ENCODE measurements at regions of chr5 and their contacts with region 1.

Region 1: GRCh38 chr5:59810041-59810440 is 83.5 kb downstream of the PDE4D start:
- DNase-seq: peak; percentile 66
- H3K4me3 Mint-ChIP-seq: peak overlapping the region; percentile 62
- H3K27ac Mint-ChIP-seq: no peak overlapping the region
- H3K4me1 Mint-ChIP-seq: peaks cover 11% of the 10 kb centered on the region
- H3K27me3 Mint-ChIP-seq: peaks cover 16% of the 10 kb centered on the region
- CTCF ChIP-seq: peak; percentile 83

Region 2: GRCh38 chr5:58983526-58984452 is 826.3 kb before region 1 on chr5:
- CTCF ChIA-PET with region 1: no interaction called
- POLR2A ChIA-PET with region 1: no interaction called
- intact Hi-C with region 1: no loop called
- DNase-seq: no peak
- H3K4me3 Mint-ChIP-seq: no peak overlapping the region
- H3K27ac Mint-ChIP-seq: no peak overlapping the region
- H3K4me1 Mint-ChIP-seq: peaks cover 15% of the 10 kb centered on the region
- H3K27me3 Mint-ChIP-seq: no peaks in the 10 kb centered on the region
- CTCF ChIP-seq: no peak

Region 3: DNA sequence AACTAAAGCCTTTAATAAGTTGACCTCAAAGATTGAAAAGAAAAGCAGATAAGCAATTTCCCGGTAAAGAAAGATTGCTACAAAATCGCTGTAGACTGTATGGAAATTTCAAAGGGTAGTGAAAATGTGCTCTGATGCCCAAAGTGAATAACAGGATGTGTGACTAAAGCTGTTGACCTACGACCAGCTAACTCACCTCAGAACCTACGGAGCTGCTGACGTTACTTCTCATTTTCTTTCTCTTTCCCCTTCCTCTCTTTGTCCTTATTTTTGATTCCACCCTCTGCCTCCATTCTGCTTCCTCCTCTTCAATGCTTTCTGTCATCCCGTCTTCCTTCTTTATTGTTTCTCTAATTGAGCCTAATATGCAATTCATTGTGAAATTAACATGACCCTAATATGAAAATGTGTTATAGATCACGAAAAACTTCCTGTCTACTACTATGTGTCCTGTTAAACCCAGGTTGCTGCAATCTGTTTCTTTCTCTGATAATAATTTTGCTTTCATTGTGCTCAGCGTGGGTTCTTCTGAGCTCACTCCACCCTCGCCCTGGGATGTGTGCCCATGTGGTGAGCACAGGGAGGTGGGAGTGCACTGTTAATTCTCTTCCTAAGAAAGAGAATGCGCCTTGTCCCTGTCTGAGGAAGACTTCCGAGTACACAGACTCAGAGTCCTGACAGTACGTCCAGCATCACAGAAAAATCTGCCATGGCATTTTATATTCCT is 19.5 kb before region 1 on chr5:
- CTCF ChIA-PET with region 1: no interaction called
- POLR2A ChIA-PET with region 1: no interaction called
- intact Hi-C with region 1: no loop called
- DNase-seq: peak; percentile 79
- H3K4me3 Mint-ChIP-seq: peak overlapping the region; percentile 52
- H3K27ac Mint-ChIP-seq: peak overlapping the region; percentile 89
- H3K4me1 Mint-ChIP-seq: peaks cover 67% of the 10 kb centered on the region
- H3K27me3 Mint-ChIP-seq: no peaks in the 10 kb centered on the region
- CTCF ChIP-seq: no peak

Region 4: DNA sequence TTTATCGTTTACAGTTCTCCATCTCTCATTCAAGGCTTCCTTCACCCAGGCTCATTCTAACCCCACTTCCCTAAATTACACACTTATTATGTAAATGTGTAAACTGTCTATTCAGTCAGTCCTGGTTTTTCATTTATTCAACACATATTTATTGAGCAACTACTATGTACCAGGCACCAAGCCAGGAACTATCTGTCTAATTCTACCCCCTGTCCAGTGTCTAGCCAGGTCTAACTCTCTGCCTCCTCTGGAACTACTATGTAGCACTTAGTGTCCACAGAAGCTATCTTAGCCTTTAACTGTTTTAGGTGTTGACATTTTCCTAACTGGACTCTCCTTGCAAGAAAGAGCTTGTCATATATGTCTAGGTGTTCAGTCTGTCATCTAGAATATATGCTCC is 27.0 kb after region 1 on chr5:
- CTCF ChIA-PET with region 1: interaction called, 10 read pairs
- POLR2A ChIA-PET with region 1: no interaction called
- intact Hi-C with region 1: no loop called
- DNase-seq: no peak
- H3K4me3 Mint-ChIP-seq: no peak overlapping the region
- H3K27ac Mint-ChIP-seq: no peak overlapping the region
- H3K4me1 Mint-ChIP-seq: peaks cover 4% of the 10 kb centered on the region
- H3K27me3 Mint-ChIP-seq: peaks cover 68% of the 10 kb centered on the region
- CTCF ChIP-seq: no peak

Region 5: GRCh38 chr5:60007701-60008100 is 197.7 kb after region 1 on chr5:
- CTCF ChIA-PET with region 1: no interaction called
- POLR2A ChIA-PET with region 1: no interaction called
- intact Hi-C with region 1: no loop called
- DNase-seq: no peak
- H3K4me3 Mint-ChIP-seq: no peak overlapping the region
- H3K27ac Mint-ChIP-seq: no peak overlapping the region
- H3K4me1 Mint-ChIP-seq: no peaks in the 10 kb centered on the region
- H3K27me3 Mint-ChIP-seq: peaks cover 21% of the 10 kb centered on the region
- CTCF ChIP-seq: no peak

Region 6: GRCh38 chr5:60161340-60161934 is 351.4 kb after region 1 on chr5:
- CTCF ChIA-PET with region 1: interaction called, 11 read pairs
- POLR2A ChIA-PET with region 1: no interaction called
- intact Hi-C with region 1: loop called (anchors 1 kb)
- DNase-seq: peak; percentile 40
- H3K4me3 Mint-ChIP-seq: no peak overlapping the region
- H3K27ac Mint-ChIP-seq: no peak overlapping the region
- H3K4me1 Mint-ChIP-seq: no peaks in the 10 kb centered on the region
- H3K27me3 Mint-ChIP-seq: peaks cover 50% of the 10 kb centered on the region
- CTCF ChIP-seq: peak; percentile 35

Region 7: DNA sequence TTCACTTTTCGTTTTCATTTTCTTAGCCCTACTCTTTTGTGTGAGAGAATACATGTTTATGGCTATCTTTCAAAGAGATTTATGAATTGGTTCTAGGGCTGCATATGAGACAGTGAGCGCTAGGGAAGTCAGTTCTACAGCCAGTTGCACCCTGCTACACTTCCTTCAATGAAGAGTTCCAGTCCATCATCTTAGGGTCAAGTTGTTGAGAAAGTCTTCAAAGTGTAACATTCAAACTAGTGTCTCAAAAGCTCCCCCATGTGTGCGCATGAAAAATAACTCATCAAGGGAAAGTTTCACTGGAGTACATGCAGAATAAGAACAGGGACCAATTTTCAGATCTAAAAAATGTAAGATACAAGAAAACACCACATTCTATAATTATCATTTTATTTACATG is 572.7 kb after region 1 on chr5:
- CTCF ChIA-PET with region 1: interaction called, 21 read pairs
- POLR2A ChIA-PET with region 1: interaction called, 3 read pairs
- intact Hi-C with region 1: loop called (anchors 1 kb)
- DNase-seq: peak; percentile 35
- H3K4me3 Mint-ChIP-seq: no peak overlapping the region
- H3K27ac Mint-ChIP-seq: no peak overlapping the region
- H3K4me1 Mint-ChIP-seq: no peaks in the 10 kb centered on the region
- H3K27me3 Mint-ChIP-seq: peaks cover 85% of the 10 kb centered on the region
- CTCF ChIP-seq: peak; percentile 34

Region 8: DNA sequence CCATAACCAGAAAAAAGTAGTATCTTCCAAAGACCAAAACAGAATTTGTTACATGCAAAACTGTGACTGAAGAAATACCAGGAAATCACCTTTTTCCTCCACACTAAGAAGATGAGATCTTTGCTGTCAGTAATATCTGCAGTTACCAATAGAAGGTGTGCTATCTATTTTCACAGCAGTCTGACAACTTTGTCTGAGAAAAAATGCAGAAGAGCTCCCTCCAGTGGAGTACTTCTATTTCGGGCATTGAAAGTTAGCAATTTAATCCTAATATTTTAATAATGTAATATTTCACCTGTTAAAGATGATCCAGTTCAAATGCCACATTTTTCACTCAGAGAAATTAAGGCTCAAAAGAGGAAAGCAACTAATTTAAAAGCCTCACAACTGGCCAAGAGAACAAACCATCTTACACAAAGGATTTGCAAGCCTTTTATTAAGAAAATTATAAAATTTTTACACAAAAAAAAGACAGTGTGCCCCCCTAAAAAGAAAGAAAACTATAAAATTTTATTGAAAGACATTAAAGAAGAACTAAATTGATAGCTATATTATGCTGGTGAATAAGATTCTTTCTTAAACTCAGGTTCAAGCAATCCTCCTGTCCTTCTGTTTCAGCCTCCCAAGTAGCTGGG is 839.4 kb after region 1 on chr5:
- CTCF ChIA-PET with region 1: interaction called, 11 read pairs
- POLR2A ChIA-PET with region 1: no interaction called
- intact Hi-C with region 1: loop called (anchors 2 kb)
- DNase-seq: peak; percentile 63
- H3K4me3 Mint-ChIP-seq: no peak overlapping the region
- H3K27ac Mint-ChIP-seq: no peak overlapping the region
- H3K4me1 Mint-ChIP-seq: peaks cover 22% of the 10 kb centered on the region
- H3K27me3 Mint-ChIP-seq: no peaks in the 10 kb centered on the region
- CTCF ChIP-seq: peak; percentile 49